HepG2 (cell line): ENCODE measurements at regions of chr10 and their contacts with region 1.

Region 1: GRCh38 chr10:35635576-35635975 is 6.5 kb downstream of the FZD8 start:
- DNase-seq: peak; percentile 66
- ATAC-seq: peak; percentile 89
- H3K4me3 ChIP-seq: no peak overlapping the region
- H3K27ac ChIP-seq: no peak overlapping the region
- H3K4me1 ChIP-seq: no peaks in the 10 kb centered on the region
- H3K27me3 ChIP-seq: no peaks in the 10 kb centered on the region
- CTCF ChIP-seq: peak; percentile 88
- EP300 ChIP-seq: no peak
- POLR2A ChIP-seq: no peak
- RAD21 ChIP-seq: peak; percentile 87

Region 2: DNA sequence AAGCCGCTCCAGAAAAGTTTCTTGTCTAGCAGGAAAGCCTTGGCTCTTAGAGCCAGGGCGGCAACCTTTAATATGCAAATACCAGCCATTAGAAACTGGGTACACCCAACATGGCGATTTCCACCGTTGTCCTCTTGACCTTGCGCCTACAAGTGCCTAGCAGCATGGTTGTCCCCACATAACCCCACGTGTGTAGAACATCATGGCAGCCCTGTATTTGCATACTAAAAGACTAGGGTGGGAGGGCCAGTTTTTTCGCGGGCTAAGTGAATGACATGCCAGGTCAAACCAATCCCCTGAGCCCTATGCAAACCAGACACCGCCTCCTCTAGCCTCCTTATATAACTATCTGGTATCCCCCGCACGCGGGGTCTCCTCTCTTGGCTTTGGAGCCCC is 64.9 kb after region 1 on chr10:
- CTCF ChIA-PET with region 1: no interaction called
- POLR2A ChIA-PET with region 1: no interaction called
- in situ Hi-C with region 1: no loop called
- intact Hi-C with region 1: no loop called
- DNase-seq: no peak
- ATAC-seq: no peak
- H3K4me3 ChIP-seq: no peak overlapping the region
- H3K27ac ChIP-seq: no peak overlapping the region
- H3K4me1 ChIP-seq: no peaks in the 10 kb centered on the region
- H3K27me3 ChIP-seq: peaks cover 1 to 17% of the 10 kb centered on the region in 2 experiments; a peak in 3 of 5 replicates
- CTCF ChIP-seq: no peak
- EP300 ChIP-seq: no peak
- POLR2A ChIP-seq: no peak
- RAD21 ChIP-seq: no peak

Region 3: GRCh38 chr10:35781643-35782035 is 146.1 kb after region 1 on chr10:
- CTCF ChIA-PET with region 1: interaction called, 18 read pairs
- POLR2A ChIA-PET with region 1: no interaction called
- in situ Hi-C with region 1: loop called (anchors 10 kb)
- intact Hi-C with region 1: loop called (anchors 1 kb)
- DNase-seq: peak; percentile 30
- ATAC-seq: peak; percentile 50; the same call in 2 of the 3 replicates
- H3K4me3 ChIP-seq: no peak overlapping the region
- H3K27ac ChIP-seq: no peak overlapping the region
- H3K4me1 ChIP-seq: no peaks in the 10 kb centered on the region
- H3K27me3 ChIP-seq: no peaks in the 10 kb centered on the region; a peak in 1 of 5 replicates
- CTCF ChIP-seq: peak; percentile 51
- EP300 ChIP-seq: no peak
- POLR2A ChIP-seq: no peak
- RAD21 ChIP-seq: no peak

Region 4: GRCh38 chr10:35933998-35934995 is 298.7 kb after region 1 on chr10:
- CTCF ChIA-PET with region 1: no interaction called
- POLR2A ChIA-PET with region 1: no interaction called
- in situ Hi-C with region 1: no loop called
- intact Hi-C with region 1: loop called (anchors 10 kb)
- DNase-seq: no peak
- ATAC-seq: no peak
- H3K4me3 ChIP-seq: no peak overlapping the region
- H3K27ac ChIP-seq: no peak overlapping the region
- H3K4me1 ChIP-seq: peaks cover 21% of the 10 kb centered on the region
- H3K27me3 ChIP-seq: no peaks in the 10 kb centered on the region
- CTCF ChIP-seq: no peak
- EP300 ChIP-seq: no peak
- POLR2A ChIP-seq: no peak
- RAD21 ChIP-seq: no peak

Region 5: GRCh38 chr10:36725581-36726520 is 1090.3 kb after region 1 on chr10:
- CTCF ChIA-PET with region 1: no interaction called
- POLR2A ChIA-PET with region 1: no interaction called
- in situ Hi-C with region 1: no loop called
- intact Hi-C with region 1: loop called (anchors 1 kb)
- DNase-seq: peak; percentile 12
- ATAC-seq: peak; percentile 72
- H3K4me3 ChIP-seq: no peak overlapping the region
- H3K27ac ChIP-seq: no peak overlapping the region
- H3K4me1 ChIP-seq: no peaks in the 10 kb centered on the region
- H3K27me3 ChIP-seq: no peaks in the 10 kb centered on the region; a peak in 1 of 5 replicates
- CTCF ChIP-seq: peak; percentile 48
- EP300 ChIP-seq: no peak
- POLR2A ChIP-seq: no peak
- RAD21 ChIP-seq: no peak

Region 6: GRCh38 chr10:36779234-36779846 is 1143.8 kb after region 1 on chr10:
- CTCF ChIA-PET with region 1: interaction called, 14 read pairs
- POLR2A ChIA-PET with region 1: no interaction called
- in situ Hi-C with region 1: loop called (anchors 5 kb)
- intact Hi-C with region 1: loop called (anchors 1 kb)
- DNase-seq: peak; percentile 30
- ATAC-seq: peak; percentile 90
- H3K4me3 ChIP-seq: no peak overlapping the region
- H3K27ac ChIP-seq: no peak overlapping the region
- H3K4me1 ChIP-seq: no peaks in the 10 kb centered on the region
- H3K27me3 ChIP-seq: no peaks in the 10 kb centered on the region; a peak in 1 of 5 replicates
- CTCF ChIP-seq: peak; percentile 71
- EP300 ChIP-seq: no peak
- POLR2A ChIP-seq: no peak
- RAD21 ChIP-seq: peak; percentile 45; the same call in 1 of the 2 replicates

Region 7: GRCh38 chr10:36880898-36881297 is 1245.3 kb after region 1 on chr10:
- CTCF ChIA-PET with region 1: interaction called, 15 read pairs
- POLR2A ChIA-PET with region 1: no interaction called
- in situ Hi-C with region 1: loop called (anchors 5 kb)
- intact Hi-C with region 1: loop called (anchors 5 kb)
- DNase-seq: peak; percentile 21
- ATAC-seq: no peak
- H3K4me3 ChIP-seq: no peak overlapping the region
- H3K27ac ChIP-seq: no peak overlapping the region
- H3K4me1 ChIP-seq: no peaks in the 10 kb centered on the region
- H3K27me3 ChIP-seq: no peaks in the 10 kb centered on the region; a peak in 1 of 5 replicates
- CTCF ChIP-seq: peak; percentile 36; the same call in 1 of the 2 replicates
- EP300 ChIP-seq: no peak
- POLR2A ChIP-seq: no peak
- RAD21 ChIP-seq: no peak

Region 8: DNA sequence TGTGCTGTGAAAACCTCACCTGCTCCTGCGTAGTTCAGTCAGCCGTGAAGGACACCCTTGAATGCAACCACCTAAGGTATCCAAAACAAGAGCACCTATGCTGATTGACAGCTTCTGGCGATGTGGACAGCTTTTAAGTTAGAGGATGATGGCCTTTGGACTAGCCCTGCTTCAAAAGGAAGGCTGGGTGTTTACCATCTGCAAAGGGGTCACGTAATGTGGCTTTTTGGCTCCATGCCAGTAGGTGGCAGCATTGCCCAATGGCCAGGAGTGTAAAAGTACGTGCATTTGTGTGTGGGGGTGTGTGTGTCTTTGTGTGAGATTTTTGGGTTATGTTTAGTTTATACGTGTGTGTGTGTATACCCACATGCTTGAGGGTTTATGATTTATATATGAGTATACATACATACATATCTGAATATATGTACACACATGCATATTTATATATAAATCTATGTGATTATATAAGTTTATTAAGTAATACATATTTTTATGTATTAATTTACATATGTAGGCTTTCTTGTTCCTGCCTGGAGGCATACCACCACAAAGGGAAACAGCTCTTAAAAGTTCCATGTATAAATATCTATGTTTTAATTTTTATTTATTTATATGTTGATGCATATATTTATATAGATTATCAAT is 1253.5 kb after region 1 on chr10:
- CTCF ChIA-PET with region 1: no interaction called
- POLR2A ChIA-PET with region 1: no interaction called
- in situ Hi-C with region 1: loop called (anchors 5 kb)
- intact Hi-C with region 1: loop called (anchors 5 kb)
- DNase-seq: peak; percentile 89
- ATAC-seq: peak; percentile 99
- H3K4me3 ChIP-seq: no peak overlapping the region
- H3K27ac ChIP-seq: no peak overlapping the region
- H3K4me1 ChIP-seq: peaks cover 16% of the 10 kb centered on the region
- H3K27me3 ChIP-seq: no peaks in the 10 kb centered on the region
- CTCF ChIP-seq: peak; percentile 95
- EP300 ChIP-seq: peak in 1 of 2 experiments; percentile 45; a peak in 3 of 4 replicates
- POLR2A ChIP-seq: no peak
- RAD21 ChIP-seq: peak; percentile 76